Ovary (tissue), 10 donors: ENCODE measurements at regions of chr3 and their contacts with region 1.

Region 1: DNA sequence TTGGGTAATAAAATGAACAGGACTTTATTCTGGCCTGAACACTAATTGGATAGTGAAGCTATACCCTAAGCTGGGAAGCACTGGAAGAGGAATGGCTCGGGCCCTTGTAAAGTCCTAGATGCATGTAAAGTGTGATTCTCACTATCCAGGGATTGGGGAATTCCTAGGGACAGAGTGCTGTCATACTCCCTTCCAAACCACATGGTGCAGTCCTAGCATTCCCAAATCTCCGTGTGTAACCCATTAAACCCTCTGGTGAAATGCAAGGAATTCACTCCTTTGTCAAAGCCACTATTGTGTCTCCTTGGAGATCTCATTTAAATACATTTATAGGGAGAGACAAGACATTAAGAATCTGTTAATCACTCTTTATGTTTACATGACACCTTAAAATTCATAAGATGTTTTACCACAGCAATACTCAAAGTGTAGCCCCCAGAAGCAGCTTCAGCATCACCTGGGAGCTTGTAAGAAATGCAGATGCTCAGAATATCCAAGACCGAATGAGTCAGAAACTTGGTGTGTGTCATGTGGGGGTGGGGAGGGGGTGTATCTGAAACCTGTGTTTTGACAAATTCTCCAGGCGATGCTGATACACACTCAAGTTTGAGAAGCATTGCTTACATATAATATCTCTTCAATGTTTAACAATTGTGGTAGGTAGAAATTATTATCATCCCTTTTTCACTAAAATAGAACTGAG is 121.8 kb upstream of the NPHP3 start:
- DNase-seq: no peak
- H3K4me3 ChIP-seq: no peak overlapping the region
- H3K27ac ChIP-seq: no peak overlapping the region
- H3K4me1 ChIP-seq: no peaks in the 10 kb centered on the region
- H3K27me3 ChIP-seq: no peaks in the 10 kb centered on the region
- CTCF ChIP-seq: no peak
- EP300 ChIP-seq: no peak
- POLR2A ChIP-seq: no peak

Region 2: GRCh38 chr3:132817646-132818177 is 26.3 kb before region 1 on chr3:
- intact Hi-C with region 1: loop called in 1 of 4 experiments (anchors 2 kb)
- DNase-seq: no peak
- H3K4me3 ChIP-seq: no peak overlapping the region
- H3K27ac ChIP-seq: no peak overlapping the region
- H3K4me1 ChIP-seq: no peaks in the 10 kb centered on the region
- H3K27me3 ChIP-seq: no peaks in the 10 kb centered on the region
- CTCF ChIP-seq: no peak
- EP300 ChIP-seq: no peak
- POLR2A ChIP-seq: no peak